Activated CD4-positive, alpha-beta memory T cell treated with anti-CD3 and anti-CD28 coated beads, Interleukin-2, amount 10 ng/mL, durations not matched to agents 7 days and 5 days (primary cell): ENCODE measurements at regions of chr6 and their contacts with region 1.

Region 1: GRCh38 chr6:52049252-52050050 is 38.0 kb downstream of the PKHD1 start:
- DNase-seq: no peak
- H3K4me3 Mint-ChIP-seq: no peak overlapping the region
- H3K27ac Mint-ChIP-seq: no peak overlapping the region
- H3K4me1 Mint-ChIP-seq: no peaks in the 10 kb centered on the region
- H3K27me3 Mint-ChIP-seq: peaks cover 23% of the 10 kb centered on the region

Region 2: GRCh38 chr6:52020945-52021570 is 28.4 kb before region 1 on chr6:
- CTCF ChIA-PET with region 1: interaction called, 17 read pairs
- POLR2A ChIA-PET with region 1: no interaction called
- DNase-seq: no peak
- H3K4me3 Mint-ChIP-seq: no peak overlapping the region
- H3K27ac Mint-ChIP-seq: no peak overlapping the region
- H3K4me1 Mint-ChIP-seq: no peaks in the 10 kb centered on the region
- H3K27me3 Mint-ChIP-seq: peaks cover 14% of the 10 kb centered on the region

Region 3: GRCh38 chr6:52063584-52064344 is 14.3 kb after region 1 on chr6:
- CTCF ChIA-PET with region 1: interaction called, 13 read pairs
- POLR2A ChIA-PET with region 1: no interaction called
- DNase-seq: peak; percentile 72
- H3K4me3 Mint-ChIP-seq: no peak overlapping the region
- H3K27ac Mint-ChIP-seq: peak overlapping the region; percentile 67
- H3K4me1 Mint-ChIP-seq: peaks cover 11% of the 10 kb centered on the region
- H3K27me3 Mint-ChIP-seq: peaks cover 18% of the 10 kb centered on the region